H1 (cell line): ENCODE measurements at regions of chr2 and their contacts with region 1.

Region 1: DNA sequence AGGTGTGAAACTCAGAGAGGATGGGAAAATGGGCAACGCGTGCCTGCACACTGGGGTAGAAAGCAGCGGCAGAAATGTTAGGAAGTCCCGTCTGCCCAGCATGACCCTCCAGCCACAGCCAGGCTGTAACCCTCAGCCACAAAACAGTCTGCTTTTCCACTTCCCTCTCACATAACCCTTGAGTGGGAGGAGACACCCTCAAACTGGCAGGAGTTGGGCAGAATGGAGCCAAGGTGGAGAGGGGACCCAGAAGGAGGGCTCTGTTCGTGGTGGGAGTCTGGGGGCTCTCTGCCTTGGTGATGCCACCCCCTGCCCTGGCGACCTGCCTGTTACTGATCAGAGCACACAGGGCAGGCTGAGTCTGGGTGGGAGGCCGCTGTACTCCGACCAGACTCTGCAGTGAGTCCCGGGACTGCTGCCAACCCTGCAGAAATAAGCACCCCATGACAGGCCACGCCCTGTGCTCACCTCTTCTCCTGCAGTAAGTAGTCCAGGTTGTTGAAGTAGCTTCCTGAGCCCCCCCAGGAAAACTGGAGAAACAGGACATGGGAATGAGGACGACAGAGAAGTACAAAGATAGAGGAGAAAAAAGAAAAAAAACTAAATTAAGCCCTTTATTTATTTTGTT is 16.0 kb downstream of the FAM178B start:
- DNase-seq: no peak
- H3K4me3 ChIP-seq: no peak overlapping the region
- H3K27ac ChIP-seq: no peak overlapping the region
- H3K4me1 ChIP-seq: peaks cover 0 to 4% (median under 1%) of the 10 kb centered on the region in 4 experiments; a peak in 2 of 7 replicates
- H3K27me3 ChIP-seq: 0 out of 7 replicates have a peak, but pooled peaks cover 0 to 3% (median 0%) of the 10 kb centered on the region in 4 experiments
- CTCF ChIP-seq: no peak
- EP300 ChIP-seq: no peak
- POLR2A ChIP-seq: no peak
- RAD21 ChIP-seq: no peak

Region 2: GRCh38 chr2:96940001-96940615 is 30.3 kb before region 1 on chr2:
- CTCF ChIA-PET with region 1: no interaction called
- POLR2A ChIA-PET with region 1: no interaction called
- DNase-seq: no peak
- H3K4me3 ChIP-seq: no peak overlapping the region
- H3K27ac ChIP-seq: no peak overlapping the region
- H3K4me1 ChIP-seq: peaks cover 0 to 3% (median 1%) of the 10 kb centered on the region in 4 experiments; a peak in 2 of 7 replicates
- H3K27me3 ChIP-seq: no peaks in the 10 kb centered on the region
- CTCF ChIP-seq: no peak
- EP300 ChIP-seq: no peak
- POLR2A ChIP-seq: no peak
- RAD21 ChIP-seq: no peak

Region 3: DNA sequence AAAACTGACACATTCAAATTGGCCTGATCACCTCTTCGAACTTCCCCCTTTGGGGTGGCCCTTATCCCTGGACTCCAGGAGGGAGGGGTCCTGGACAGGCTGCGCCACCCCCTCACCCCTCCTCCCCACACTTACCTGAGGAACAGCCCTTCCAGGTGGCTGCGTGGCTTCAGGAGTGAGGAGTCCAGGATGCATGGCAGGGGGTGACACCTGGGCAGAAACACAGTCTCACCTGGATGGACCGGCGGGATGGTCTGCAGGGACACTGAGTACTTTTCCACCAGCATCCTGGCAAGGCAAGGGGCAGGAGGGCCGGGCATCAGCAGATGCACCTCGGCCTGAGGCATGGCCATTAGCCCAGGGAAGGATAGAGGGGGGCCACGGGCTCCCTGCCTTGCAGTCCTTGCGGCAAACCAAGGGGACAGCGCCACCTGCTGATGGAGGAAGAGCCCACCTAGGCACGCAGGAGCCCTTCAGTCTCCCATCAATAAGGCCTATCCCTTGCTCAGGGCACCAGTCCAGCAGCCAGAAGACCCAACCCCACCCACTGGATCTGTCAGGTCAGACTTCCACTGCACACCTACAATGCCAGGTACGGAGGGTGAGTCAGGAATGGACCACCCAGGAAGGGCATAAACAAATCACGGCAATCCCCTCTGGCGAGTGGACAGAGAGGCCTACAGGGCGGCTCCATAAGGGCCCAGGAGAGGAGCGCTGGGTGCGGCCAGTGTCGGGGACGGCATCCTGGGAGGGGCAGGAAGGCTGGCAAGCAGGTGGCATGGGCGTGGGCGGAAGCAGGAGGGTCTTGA is 10.0 kb before region 1 on chr2:
- CTCF ChIA-PET with region 1: interaction called, 10 read pairs
- POLR2A ChIA-PET with region 1: interaction called, 4 read pairs
- DNase-seq: peak; percentile 82 to 97
- H3K4me3 ChIP-seq: no peak overlapping the region
- H3K27ac ChIP-seq: no peak overlapping the region
- H3K4me1 ChIP-seq: peaks cover 4 to 8% (median 8%) of the 10 kb centered on the region in 4 experiments
- H3K27me3 ChIP-seq: no peaks in the 10 kb centered on the region
- CTCF ChIP-seq: peak; percentile 95 to 99 (median 99)
- EP300 ChIP-seq: no peak
- POLR2A ChIP-seq: no peak
- RAD21 ChIP-seq: peak; percentile 97 to 99